Left ventricle myocardium superior (tissue), 1 donor: ENCODE measurements at regions of chr14 and their contacts with region 1.

Region 1: GRCh38 chr14:53055003-53055402 is 98.1 kb downstream of the DDHD1 start:
- DNase-seq: no peak
- ATAC-seq: peak; percentile 75

Region 2: GRCh38 chr14:52755607-52756253 is 299.3 kb before region 1 on chr14:
- intact Hi-C with region 1: no loop called
- DNase-seq: no peak
- ATAC-seq: no peak

Region 3: DNA sequence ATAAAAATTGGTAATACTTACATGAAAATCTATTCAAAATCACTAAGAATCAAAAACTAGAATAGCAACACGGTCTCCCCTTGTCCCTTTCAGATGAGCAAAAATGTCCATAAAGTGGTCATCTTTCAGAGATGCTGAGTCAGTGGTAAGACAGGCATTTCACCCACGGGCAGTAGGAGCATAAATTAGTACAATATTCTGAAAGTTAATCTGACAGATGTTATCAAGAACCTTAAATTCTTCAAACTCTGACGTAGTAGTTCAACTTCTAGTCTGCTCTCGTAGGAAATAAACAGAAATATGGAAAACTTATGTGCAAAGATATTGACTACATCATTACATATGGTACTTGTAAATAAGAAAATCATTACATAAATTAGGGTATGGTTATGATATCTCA is 230.5 kb before region 1 on chr14:
- intact Hi-C with region 1: loop called (anchors 5 kb)
- DNase-seq: no peak
- ATAC-seq: no peak

Region 4: GRCh38 chr14:52840916-52841315 is 214.1 kb before region 1 on chr14:
- intact Hi-C with region 1: no loop called
- DNase-seq: peak; percentile 37
- ATAC-seq: peak; percentile 65

Region 5: GRCh38 chr14:52961060-52961639 is 93.9 kb before region 1 on chr14:
- intact Hi-C with region 1: loop called (anchors 10 kb)
- DNase-seq: peak; percentile 29
- ATAC-seq: peak; percentile 96